ENCODE measurements at regions of chr3 and their contacts with region 1.

Region 1: DNA sequence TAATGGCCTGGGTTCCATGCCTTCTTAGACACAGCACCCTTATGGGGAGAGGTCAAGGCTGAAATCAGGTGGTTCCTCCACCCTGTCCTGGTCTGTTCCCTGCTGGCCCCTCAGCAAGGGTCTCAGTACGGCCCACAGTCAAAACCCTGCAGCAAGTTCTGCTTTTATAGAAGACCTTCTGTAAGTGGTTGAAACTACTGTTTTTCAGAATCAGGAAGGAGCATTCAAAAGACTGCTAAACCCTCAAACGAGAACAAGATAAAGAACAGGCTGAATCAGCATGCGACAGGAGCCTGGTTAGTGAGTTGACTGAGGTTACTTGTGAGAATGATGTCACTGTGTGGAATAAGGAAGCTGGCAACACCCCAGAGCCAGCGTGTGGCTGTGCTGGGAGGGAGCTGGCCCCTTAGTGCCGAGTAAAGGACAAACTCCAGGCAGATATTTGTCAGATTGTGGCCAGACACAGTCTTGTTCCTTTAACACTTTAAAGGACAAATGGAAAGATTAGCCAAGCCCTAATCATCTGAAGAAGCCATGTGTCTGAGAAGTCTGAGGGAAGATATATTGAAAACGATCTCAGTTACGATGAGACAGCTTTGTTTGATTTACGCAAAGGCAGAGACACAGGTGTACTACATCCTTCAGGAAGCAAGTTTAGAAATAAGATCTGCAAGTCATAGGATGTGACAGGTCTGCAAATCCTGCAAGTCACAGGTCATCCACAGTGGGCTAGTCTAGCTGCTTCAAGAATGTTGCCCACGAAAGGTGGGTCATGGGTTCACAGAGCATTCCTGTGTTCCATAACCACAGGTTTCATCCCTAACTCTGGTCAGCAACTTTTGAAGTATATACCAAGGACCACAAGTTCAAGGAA is 54.0 kb downstream of the B3GNT5 start:
- DNase-seq: peak; percentile 28
- H3K4me3 Mint-ChIP-seq: peak overlapping the region; percentile 53
- H3K27ac Mint-ChIP-seq: peak overlapping the region; percentile 72
- H3K4me1 Mint-ChIP-seq: peaks cover 39% of the 10 kb centered on the region
- H3K27me3 Mint-ChIP-seq: no peaks in the 10 kb centered on the region

Region 2: GRCh38 chr3:183210839-183211341 is 96.1 kb before region 1 on chr3:
- intact Hi-C with region 1: no loop called
- DNase-seq: no peak
- H3K4me3 Mint-ChIP-seq: no peak overlapping the region
- H3K27ac Mint-ChIP-seq: peak overlapping the region; percentile 19
- H3K4me1 Mint-ChIP-seq: peaks cover 22% of the 10 kb centered on the region
- H3K27me3 Mint-ChIP-seq: peaks cover 2% of the 10 kb centered on the region

Region 3: GRCh38 chr3:183349421-183350157 is 42.6 kb after region 1 on chr3:
- intact Hi-C with region 1: loop called (anchors 5 kb)
- DNase-seq: no peak
- H3K4me3 Mint-ChIP-seq: no peak overlapping the region
- H3K27ac Mint-ChIP-seq: peak overlapping the region; percentile 6
- H3K4me1 Mint-ChIP-seq: peaks cover 16% of the 10 kb centered on the region
- H3K27me3 Mint-ChIP-seq: peaks cover 13% of the 10 kb centered on the region

Measured in activated T-helper 1 cell treated with anti-CD3 and anti-CD28 coated beads, Interleukin-12 subunit alpha, Interleukin-12 subunit beta, Interleukin-2, Interleukin-4 antibody, amounts not matched to agents 30 ng/mL and 10 ng/mL and 1 ng/mL, durations not matched to agents 14 hours and 24 hours and 36 hours (primary cell).